HEK293 (cell line): ENCODE measurements at regions of chr7 and their contacts with region 1.

Region 1: GRCh38 chr7:22452142-22452959 is 47.6 kb downstream of the STEAP1B start:
- H3K4me3 ChIP-seq: no peak overlapping the region
- H3K27ac ChIP-seq: no peak overlapping the region
- H3K4me1 ChIP-seq: no peaks in the 10 kb centered on the region
- CTCF ChIP-seq: 0 out of 2 replicates have a peak, but pooled peaks have one; percentile 12

Region 2: GRCh38 chr7:22339725-22340390 is 112.5 kb before region 1 on chr7:
- CTCF ChIA-PET with region 1: no interaction called
- POLR2A ChIA-PET with region 1: no interaction called
- H3K4me3 ChIP-seq: no peak overlapping the region
- H3K27ac ChIP-seq: no peak overlapping the region
- H3K4me1 ChIP-seq: no peaks in the 10 kb centered on the region
- CTCF ChIP-seq: no peak

Region 3: GRCh38 chr7:22406715-22407114 is 45.6 kb before region 1 on chr7:
- CTCF ChIA-PET with region 1: no interaction called
- POLR2A ChIA-PET with region 1: no interaction called
- H3K4me3 ChIP-seq: no peak overlapping the region
- H3K27ac ChIP-seq: no peak overlapping the region
- H3K4me1 ChIP-seq: no peaks in the 10 kb centered on the region
- CTCF ChIP-seq: no peak

Region 4: GRCh38 chr7:22469371-22470143 is 17.2 kb after region 1 on chr7:
- CTCF ChIA-PET with region 1: interaction called, 13 read pairs
- POLR2A ChIA-PET with region 1: no interaction called
- H3K4me3 ChIP-seq: no peak overlapping the region
- H3K27ac ChIP-seq: no peak overlapping the region
- H3K4me1 ChIP-seq: no peaks in the 10 kb centered on the region
- CTCF ChIP-seq: no peak

Region 5: GRCh38 chr7:22627136-22627535 is 174.8 kb after region 1 on chr7:
- CTCF ChIA-PET with region 1: no interaction called
- POLR2A ChIA-PET with region 1: no interaction called
- H3K4me3 ChIP-seq: no peak overlapping the region
- H3K27ac ChIP-seq: no peak overlapping the region
- H3K4me1 ChIP-seq: no peaks in the 10 kb centered on the region
- CTCF ChIP-seq: no peak

Region 6: DNA sequence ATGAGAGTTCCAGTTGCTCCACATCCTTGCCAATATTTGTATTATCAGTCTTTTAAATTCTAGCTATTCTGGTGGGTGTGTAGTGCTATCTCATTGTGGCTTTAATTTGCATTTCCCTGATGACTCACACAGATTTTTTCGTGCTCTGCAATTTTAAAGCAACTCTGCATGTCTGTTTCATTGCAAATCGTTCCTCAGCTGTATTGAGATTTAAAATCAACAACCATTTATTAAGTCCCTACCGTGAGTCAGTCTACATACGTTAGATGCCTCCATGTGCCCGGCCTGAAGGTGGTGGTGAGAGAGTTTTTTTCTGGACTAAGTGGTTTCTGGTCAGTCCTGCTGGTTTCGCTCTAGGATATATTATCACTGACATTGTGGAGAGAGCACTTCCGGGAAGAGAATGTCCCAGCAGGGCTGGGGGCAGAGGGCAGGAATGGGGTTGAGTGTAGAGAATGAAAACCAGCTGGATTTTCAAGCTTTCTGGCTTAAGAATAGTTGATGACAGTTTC is 570.0 kb after region 1 on chr7:
- CTCF ChIA-PET with region 1: no interaction called
- POLR2A ChIA-PET with region 1: no interaction called
- H3K4me3 ChIP-seq: no peak overlapping the region
- H3K27ac ChIP-seq: no peak overlapping the region
- H3K4me1 ChIP-seq: no peaks in the 10 kb centered on the region
- CTCF ChIP-seq: no peak